Right ventricle myocardium inferior (tissue), 1 donor: ENCODE measurements at regions of chr2 and their contacts with region 1.

Region 1: GRCh38 chr2:130342533-130343275 is at the start of gene IMP4:
- DNase-seq: peak; percentile 97
- ATAC-seq: peak; percentile 98
- total RNA-seq, gene IMP4: 63.7 TPM

Region 2: GRCh38 chr2:130181325-130181879 is 161.3 kb before region 1 on chr2 and contains the start of gene SMPD4:
- intact Hi-C with region 1: loop called (anchors 5 kb)
- DNase-seq: peak; percentile 99
- ATAC-seq: peak; percentile 93
- total RNA-seq, gene SMPD4: 25.6 TPM

Region 3: GRCh38 chr2:130355578-130356431 is 13.1 kb after region 1 on chr2 and contains the start of gene PTPN18:
- intact Hi-C with region 1: loop called (anchors 1 kb)
- DNase-seq: peak; percentile 98
- ATAC-seq: peak; percentile 98
- total RNA-seq, gene PTPN18: 16.9 TPM

Region 4: GRCh38 chr2:130372055-130372832 is 29.5 kb after region 1 on chr2:
- intact Hi-C with region 1: loop called (anchors 2 kb)
- DNase-seq: peak; percentile 96
- ATAC-seq: peak; percentile 96

Region 5: DNA sequence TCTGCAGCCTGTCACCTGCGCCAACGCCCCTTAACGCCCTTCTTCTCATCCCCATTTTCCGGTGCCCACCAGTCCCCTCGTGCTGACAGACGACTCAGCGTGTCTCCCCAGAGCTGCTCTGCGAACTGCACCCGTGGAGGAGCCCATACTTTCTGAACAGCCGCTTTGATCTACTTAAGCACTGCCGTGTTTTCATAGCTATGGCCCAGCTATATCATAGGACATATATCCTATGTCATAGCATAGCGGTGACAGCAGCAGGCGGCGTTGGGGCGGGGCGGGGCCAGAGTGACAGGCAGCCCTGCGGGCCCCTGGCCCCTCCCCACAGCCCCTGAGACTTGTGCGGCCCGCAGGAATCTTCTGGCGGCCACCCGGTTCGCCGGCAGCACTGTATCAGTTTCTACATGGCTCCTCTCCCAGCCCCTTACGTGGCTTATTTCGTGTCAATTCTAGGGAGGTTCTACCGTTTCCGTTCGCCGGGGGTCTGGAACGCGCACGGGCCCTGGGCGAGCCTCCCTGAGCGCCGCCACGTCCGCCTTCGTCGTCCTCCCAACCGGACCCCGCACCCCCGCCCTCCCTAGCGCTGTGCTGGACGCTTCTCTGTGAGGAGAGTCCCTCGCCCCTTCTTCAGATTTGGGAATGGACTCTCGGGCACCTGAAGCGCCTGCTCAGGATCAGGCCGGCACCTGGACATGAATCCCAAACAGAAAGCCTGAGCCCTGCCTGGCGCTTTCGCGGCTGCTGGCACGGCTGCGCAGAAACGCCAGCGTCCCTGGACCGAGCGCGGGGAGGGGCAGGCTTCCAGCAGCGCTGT is 48.6 kb after region 1 on chr2:
- intact Hi-C with region 1: loop called (anchors 1 kb)
- DNase-seq: peak; percentile 95
- ATAC-seq: peak; percentile 90